IMR-90 (cell line): ENCODE measurements at regions of chr2 and their contacts with region 1.

Region 1: GRCh38 chr2:38690499-38691294 is 24.8 kb downstream of the GALM start:
- DNase-seq: peak; percentile 97
- ATAC-seq: peak; percentile 91
- H3K4me3 ChIP-seq: no peak overlapping the region
- H3K27ac ChIP-seq: peak overlapping the region; percentile 97
- H3K4me1 ChIP-seq: peaks cover 20% of the 10 kb centered on the region
- H3K27me3 ChIP-seq: no peaks in the 10 kb centered on the region
- CTCF ChIP-seq: no peak
- POLR2A ChIP-seq: no peak
- RAD21 ChIP-seq: 0 out of 2 replicates have a peak, but pooled peaks have one; percentile 11

Region 2: GRCh38 chr2:38665854-38666555 is 24.7 kb before region 1 on chr2 and contains the start of gene GALM:
- CTCF ChIA-PET with region 1: no interaction called
- POLR2A ChIA-PET with region 1: no interaction called
- dilution Hi-C with region 1: no loop called
- in situ Hi-C with region 1: no loop called
- intact Hi-C with region 1: loop called (anchors 1 kb)
- DNase-seq: peak; percentile 96
- ATAC-seq: peak; percentile 95
- H3K4me3 ChIP-seq: peak within 1 kb of the TSS; percentile 68
- H3K27ac ChIP-seq: peak within 1 kb of the TSS; percentile 60
- H3K4me1 ChIP-seq: no peaks in the 10 kb centered on the region; the same call in 1 of the 2 replicates
- H3K27me3 ChIP-seq: no peaks in the 10 kb centered on the region
- CTCF ChIP-seq: no peak
- POLR2A ChIP-seq: no peak
- RAD21 ChIP-seq: no peak
- total RNA-seq, gene GALM: 16.4 and 24.2 TPM in 2 replicates

Region 3: GRCh38 chr2:38702413-38702812 is 11.7 kb after region 1 on chr2:
- CTCF ChIA-PET with region 1: no interaction called
- POLR2A ChIA-PET with region 1: no interaction called
- dilution Hi-C with region 1: no loop called
- in situ Hi-C with region 1: no loop called
- intact Hi-C with region 1: loop called (anchors 1 kb)
- DNase-seq: peak; percentile 95
- ATAC-seq: peak; percentile 85
- H3K4me3 ChIP-seq: no peak overlapping the region
- H3K27ac ChIP-seq: peak overlapping the region; percentile 97
- H3K4me1 ChIP-seq: peaks cover 19% of the 10 kb centered on the region
- H3K27me3 ChIP-seq: no peaks in the 10 kb centered on the region
- CTCF ChIP-seq: no peak
- POLR2A ChIP-seq: peak; percentile 32; the same call in 1 of the 2 replicates
- RAD21 ChIP-seq: no peak

Region 4: DNA sequence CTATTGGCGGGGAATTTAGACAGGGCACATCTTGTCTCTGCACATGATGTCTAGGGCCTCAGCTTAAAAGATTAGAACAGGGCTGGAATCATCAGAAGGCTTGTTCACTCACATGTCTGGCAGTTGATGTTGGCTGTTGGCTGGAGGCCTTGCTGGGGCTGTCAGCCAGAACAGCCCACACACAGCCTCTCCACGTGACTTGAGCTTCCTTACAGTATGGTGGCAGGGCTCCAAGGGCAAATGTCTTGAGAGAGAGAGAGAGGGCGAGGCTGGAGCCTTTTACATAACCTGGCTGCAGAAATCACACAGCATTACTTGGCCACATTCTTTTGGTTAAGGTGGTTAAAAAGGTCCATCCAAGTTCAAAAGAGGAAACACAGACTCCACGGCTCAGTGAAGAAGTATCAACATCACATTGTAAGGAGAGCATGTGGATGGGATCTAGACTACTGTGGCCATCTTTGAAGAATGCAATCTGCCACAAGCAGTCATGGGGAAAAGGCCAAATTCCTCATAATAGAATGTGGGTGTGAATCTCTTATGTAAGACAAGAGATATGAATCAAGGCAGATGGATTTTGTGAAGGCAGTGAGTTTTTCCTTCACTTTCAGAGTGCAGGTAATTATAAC is 30.0 kb after region 1 on chr2:
- CTCF ChIA-PET with region 1: no interaction called
- POLR2A ChIA-PET with region 1: no interaction called
- dilution Hi-C with region 1: no loop called
- in situ Hi-C with region 1: no loop called
- intact Hi-C with region 1: loop called (anchors 1 kb)
- DNase-seq: peak; percentile 98
- ATAC-seq: peak; percentile 74
- H3K4me3 ChIP-seq: no peak overlapping the region
- H3K27ac ChIP-seq: peak overlapping the region; percentile 2; the same call in 1 of the 2 replicates
- H3K4me1 ChIP-seq: peaks cover 7% of the 10 kb centered on the region
- H3K27me3 ChIP-seq: no peaks in the 10 kb centered on the region
- CTCF ChIP-seq: no peak
- POLR2A ChIP-seq: no peak
- RAD21 ChIP-seq: no peak